ENCODE measurements at regions of chr12 and their contacts with region 1.

Region 1: GRCh38 chr12:2853626-2854025 is 3.2 kb downstream of the TEX52 start:
- DNase-seq: peak; percentile 45 to 66 (median 61)
- H3K4me3 ChIP-seq: no peak overlapping the region
- H3K27ac ChIP-seq: no peak overlapping the region
- H3K4me1 ChIP-seq: no peaks in the 10 kb centered on the region
- H3K27me3 ChIP-seq: no peaks in the 10 kb centered on the region

Region 2: GRCh38 chr12:2890388-2891239 is 37.0 kb after region 1 on chr12 and contains the start of gene TULP3:
- CTCF ChIA-PET with region 1: no interaction called
- POLR2A ChIA-PET with region 1: no interaction called
- DNase-seq: peak; percentile 96 to 98 (median 98)
- H3K4me3 ChIP-seq: peak within 1 kb of the TSS; percentile 67 to 90 (median 79)
- H3K27ac ChIP-seq: peak within 1 kb of the TSS; percentile 40 to 61
- H3K4me1 ChIP-seq: peaks cover 0 to 12% (median 11%) of the 10 kb centered on the region in 4 experiments
- H3K27me3 ChIP-seq: no peaks in the 10 kb centered on the region

Region 3: GRCh38 chr12:2902272-2902880 is 48.8 kb after region 1 on chr12:
- CTCF ChIA-PET with region 1: no interaction called
- POLR2A ChIA-PET with region 1: no interaction called
- DNase-seq: peak in 1 of 3 donors; percentile 30
- H3K4me3 ChIP-seq: no peak overlapping the region
- H3K27ac ChIP-seq: no peak overlapping the region
- H3K4me1 ChIP-seq: no peaks in the 10 kb centered on the region
- H3K27me3 ChIP-seq: no peaks in the 10 kb centered on the region

Region 4: DNA sequence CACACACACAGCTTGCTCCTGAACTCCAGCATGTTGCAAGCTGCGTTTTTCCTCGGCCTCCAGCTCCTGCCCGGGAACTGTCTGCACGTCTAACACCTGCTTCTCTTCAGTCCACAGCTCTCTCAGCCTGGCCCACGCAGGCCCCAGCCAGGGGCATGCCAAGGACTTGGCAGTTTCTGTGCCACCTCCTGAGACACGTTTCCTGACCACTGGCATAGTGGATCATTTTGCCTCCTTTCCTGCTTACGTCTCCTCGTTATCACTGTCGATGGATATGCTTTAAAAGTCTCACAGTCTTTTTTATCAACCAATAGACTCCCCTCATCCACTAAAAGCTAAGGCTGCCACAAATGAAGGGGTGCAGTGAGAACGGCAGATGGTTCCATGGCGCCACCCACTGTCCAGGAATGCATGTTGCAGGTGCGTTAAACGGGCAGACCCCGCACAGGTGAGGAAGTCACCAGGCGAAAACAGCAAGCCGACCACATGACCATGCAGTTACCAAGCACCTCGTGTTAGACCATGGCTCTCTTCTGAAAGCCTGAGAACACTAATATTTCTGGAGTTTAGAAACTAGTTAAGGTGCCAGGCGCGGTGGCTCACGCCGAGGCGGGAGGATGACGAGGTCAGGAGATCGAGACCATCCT is 90.9 kb after region 1 on chr12:
- CTCF ChIA-PET with region 1: interaction called, 27 read pairs
- POLR2A ChIA-PET with region 1: no interaction called
- DNase-seq: peak; percentile 37 to 67 (median 65)
- H3K4me3 ChIP-seq: peak overlapping the region in 1 of 7 experiments; percentile 5
- H3K27ac ChIP-seq: no peak overlapping the region
- H3K4me1 ChIP-seq: peaks cover 0 to 2% (median 0%) of the 10 kb centered on the region in 4 experiments
- H3K27me3 ChIP-seq: peaks cover 0 to 6% (median 2%) of the 10 kb centered on the region in 5 experiments

Region 5: DNA sequence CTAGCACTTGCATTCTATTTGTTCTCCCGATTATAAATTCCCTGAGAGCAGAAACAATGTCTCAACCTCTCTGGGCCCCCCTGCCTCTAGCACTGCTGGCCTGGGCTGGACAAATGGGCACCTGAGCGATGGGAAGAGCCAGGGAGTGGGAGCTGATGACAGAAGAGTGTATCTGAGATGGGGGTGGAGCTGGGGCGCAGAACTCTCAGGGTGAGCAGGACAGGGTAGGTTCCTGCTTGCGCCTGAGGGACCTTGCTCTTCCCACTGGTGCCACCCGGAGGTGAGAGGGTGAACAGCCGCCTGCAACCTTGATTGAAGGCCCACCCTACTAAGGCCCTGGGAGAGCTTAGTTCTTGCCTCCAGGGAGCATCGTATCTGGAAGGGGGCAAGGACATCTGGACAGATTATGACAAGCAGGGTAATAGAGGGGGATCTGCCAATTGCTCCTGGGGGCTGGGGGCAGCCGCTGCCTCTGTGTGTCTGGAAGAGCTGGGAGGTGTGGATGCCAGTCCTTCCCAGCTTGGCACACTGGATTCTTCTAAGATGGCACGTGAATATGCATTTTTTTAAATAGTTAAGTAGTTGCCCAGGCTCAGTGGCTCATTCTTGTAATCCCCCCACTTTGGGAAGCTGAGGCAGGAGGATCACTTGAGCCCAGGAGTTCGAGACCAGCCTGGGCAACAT is 180.6 kb after region 1 on chr12:
- CTCF ChIA-PET with region 1: interaction called, 15 read pairs
- POLR2A ChIA-PET with region 1: no interaction called
- DNase-seq: peak; percentile 54 to 78 (median 66)
- H3K4me3 ChIP-seq: no peak overlapping the region
- H3K27ac ChIP-seq: no peak overlapping the region
- H3K4me1 ChIP-seq: no peaks in the 10 kb centered on the region
- H3K27me3 ChIP-seq: no peaks in the 10 kb centered on the region

Region 6: DNA sequence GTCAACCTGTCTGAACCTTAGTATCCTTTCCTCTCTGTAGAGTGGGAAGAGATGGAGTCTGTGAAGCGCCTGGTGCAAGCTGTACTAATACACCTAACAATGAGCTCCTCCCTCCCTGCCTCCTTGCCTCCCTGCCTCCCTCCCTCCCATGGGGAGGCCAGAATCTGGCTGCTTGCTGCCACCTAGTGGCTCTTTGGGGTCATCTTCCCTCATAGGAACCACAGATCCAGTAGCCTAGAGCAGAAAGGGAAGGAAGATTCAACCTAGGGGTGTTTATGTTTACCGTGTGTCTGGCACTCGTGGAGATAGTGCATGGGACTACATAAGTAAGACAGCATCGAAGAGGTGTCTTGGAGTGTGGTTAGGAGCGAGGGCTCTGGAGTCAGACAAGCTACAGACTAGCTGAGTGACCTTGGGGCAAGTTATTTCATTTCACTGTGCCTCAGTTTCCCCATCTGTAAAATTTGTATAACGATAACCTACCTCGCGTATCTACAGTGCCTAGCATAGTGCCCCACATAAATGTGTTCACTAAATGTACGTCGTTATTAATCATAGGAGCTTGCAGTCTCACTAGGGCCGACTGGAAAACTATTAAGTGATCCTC is 188.0 kb after region 1 on chr12:
- CTCF ChIA-PET with region 1: interaction called, 13 read pairs
- POLR2A ChIA-PET with region 1: no interaction called
- DNase-seq: peak; percentile 84 to 93 (median 88)
- H3K4me3 ChIP-seq: peak overlapping the region in 1 of 7 experiments; percentile 1
- H3K27ac ChIP-seq: no peak overlapping the region
- H3K4me1 ChIP-seq: peaks cover 10 to 30% (median 23%) of the 10 kb centered on the region in 4 experiments
- H3K27me3 ChIP-seq: no peaks in the 10 kb centered on the region